ENCODE measurements at regions of chr12 and their contacts with region 1.

Region 1: DNA sequence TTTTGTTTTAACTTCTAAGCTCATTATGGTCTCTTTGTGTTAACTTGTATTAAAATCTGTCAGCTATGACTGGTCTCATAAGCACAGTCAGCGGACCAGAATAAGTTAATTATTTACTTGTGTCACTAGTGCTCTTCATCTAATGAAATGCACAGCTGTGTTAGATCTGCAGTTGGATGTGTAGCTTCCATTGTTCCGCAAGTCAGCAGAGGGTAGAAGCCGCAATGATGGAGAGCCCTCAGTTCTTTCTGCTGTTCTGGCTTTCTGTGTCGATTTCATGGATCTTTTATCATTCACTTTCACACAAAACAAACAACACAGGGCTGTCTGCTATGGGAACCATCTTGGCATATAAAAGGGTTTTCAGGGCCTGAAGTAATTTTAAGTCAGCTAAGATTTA is 89.3 kb upstream of the RFX4 start:
- DNase-seq: no peak
- H3K4me3 ChIP-seq: no peak overlapping the region
- H3K27ac ChIP-seq: no peak overlapping the region
- H3K4me1 ChIP-seq: peaks cover 5% of the 10 kb centered on the region
- H3K27me3 ChIP-seq: no peaks in the 10 kb centered on the region
- CTCF ChIP-seq: no peak

Region 2: DNA sequence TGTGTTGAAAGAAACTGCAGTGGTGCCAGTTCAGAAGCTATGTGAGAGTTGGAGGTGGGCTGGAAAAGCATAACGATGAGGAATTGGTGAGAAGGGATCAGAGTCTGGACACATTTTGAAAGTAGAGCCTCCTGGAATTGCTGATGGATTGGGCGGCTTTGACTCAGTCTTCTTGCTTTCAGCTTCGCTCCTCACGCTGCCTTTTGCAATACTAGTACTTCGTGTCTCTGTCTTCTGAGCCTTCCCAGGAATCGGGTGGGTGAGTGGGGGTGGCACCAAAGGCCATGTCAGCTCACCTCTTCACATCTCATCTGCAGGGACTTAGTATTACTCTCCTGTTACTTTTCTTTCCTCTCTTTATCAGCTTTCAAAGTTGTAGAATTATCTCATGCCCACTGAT is 12.3 kb before region 1 on chr12:
- CTCF ChIA-PET with region 1: no interaction called
- dilution Hi-C with region 1: no loop called
- in situ Hi-C with region 1: no loop called
- intact Hi-C with region 1: loop called (anchors 1 kb)
- DNase-seq: no peak
- H3K4me3 ChIP-seq: no peak overlapping the region
- H3K27ac ChIP-seq: no peak overlapping the region
- H3K4me1 ChIP-seq: no peaks in the 10 kb centered on the region
- H3K27me3 ChIP-seq: no peaks in the 10 kb centered on the region
- CTCF ChIP-seq: no peak

Region 3: GRCh38 chr12:106601496-106601895 is 108.0 kb after region 1 on chr12:
- CTCF ChIA-PET with region 1: no interaction called
- dilution Hi-C with region 1: no loop called
- in situ Hi-C with region 1: no loop called
- intact Hi-C with region 1: no loop called
- DNase-seq: no peak
- H3K4me3 ChIP-seq: no peak overlapping the region
- H3K27ac ChIP-seq: no peak overlapping the region
- H3K4me1 ChIP-seq: no peaks in the 10 kb centered on the region
- H3K27me3 ChIP-seq: no peaks in the 10 kb centered on the region
- CTCF ChIP-seq: no peak